Sigmoid colon (tissue), 7 donors: ENCODE measurements at regions of chr4 and their contacts with region 1.

Region 1: DNA sequence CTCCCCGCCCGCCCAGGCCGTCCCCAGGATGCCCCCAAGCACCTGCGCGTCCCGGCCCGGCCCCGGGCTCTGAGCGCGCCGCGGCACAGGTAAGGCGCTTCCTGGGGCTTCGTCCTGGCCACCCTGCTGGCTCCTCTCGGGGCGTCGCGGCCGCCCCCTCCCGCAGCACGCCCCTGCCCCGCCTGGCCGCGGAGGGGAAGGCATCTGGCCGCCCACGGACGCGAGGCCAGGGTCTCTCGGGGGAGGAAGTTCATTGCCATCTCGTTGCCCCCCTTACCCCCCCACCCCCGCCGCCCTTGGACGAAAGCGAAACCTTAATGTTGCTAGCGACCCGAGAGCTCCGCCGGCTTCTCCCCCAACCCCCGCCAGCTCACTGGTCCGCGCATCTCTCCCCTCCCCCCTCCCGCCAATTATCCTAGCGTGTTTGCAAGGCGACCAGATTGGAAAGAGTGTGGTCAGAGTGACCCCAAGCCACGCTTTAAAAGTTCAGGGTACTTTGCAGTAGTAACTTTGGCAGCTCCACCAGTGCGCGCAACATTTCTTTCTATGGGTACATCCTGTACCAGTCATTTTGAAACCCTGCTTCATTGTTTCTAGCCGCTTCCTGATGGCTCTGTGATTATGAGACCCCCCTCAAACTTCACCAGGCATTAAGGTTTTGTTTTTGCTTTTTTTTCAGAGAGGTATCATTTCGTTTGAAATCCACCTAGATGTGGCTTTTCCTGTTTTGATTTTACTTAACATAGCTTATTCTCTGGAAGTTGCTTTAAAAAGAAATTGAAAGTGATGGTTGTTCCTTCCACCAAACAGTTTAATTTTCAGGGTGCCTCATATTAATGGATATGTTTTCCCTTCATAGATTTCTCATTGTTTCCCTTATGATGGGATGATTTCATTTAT is 626 bp downstream of the TBC1D1 start:
- DNase-seq: peak; percentile 86
- H3K4me3 ChIP-seq: peak overlapping the region; percentile 75 to 97 (median 87)
- H3K27ac ChIP-seq: peak overlapping the region; percentile 88 to 98 (median 94)
- H3K4me1 ChIP-seq: peaks cover 0 to 66% (median 50%) of the 10 kb centered on the region in 4 donors
- H3K27me3 ChIP-seq: no peaks in the 10 kb centered on the region
- CTCF ChIP-seq: no peak
- EP300 ChIP-seq: peak in 3 of 4 donors; percentile 15 to 69 (median 35)
- POLR2A ChIP-seq: no peak

Region 2: GRCh38 chr4:37679301-37679700 is 212.2 kb before region 1 on chr4:
- intact Hi-C with region 1: no loop called
- DNase-seq: no peak
- H3K4me3 ChIP-seq: no peak overlapping the region
- H3K27ac ChIP-seq: no peak overlapping the region
- H3K4me1 ChIP-seq: peaks cover 0 to 44% (median 32%) of the 10 kb centered on the region in 4 donors
- H3K27me3 ChIP-seq: no peaks in the 10 kb centered on the region
- CTCF ChIP-seq: no peak
- EP300 ChIP-seq: no peak
- POLR2A ChIP-seq: no peak

Region 3: GRCh38 chr4:37802068-37802666 is 89.3 kb before region 1 on chr4:
- intact Hi-C with region 1: loop called (anchors 1 kb)
- DNase-seq: no peak
- H3K4me3 ChIP-seq: no peak overlapping the region
- H3K27ac ChIP-seq: no peak overlapping the region
- H3K4me1 ChIP-seq: peaks cover 0 to 18% (median 10%) of the 10 kb centered on the region in 4 donors
- H3K27me3 ChIP-seq: no peaks in the 10 kb centered on the region
- CTCF ChIP-seq: peak in 3 of 4 experiments; percentile 18 to 59 (median 38)
- EP300 ChIP-seq: no peak
- POLR2A ChIP-seq: no peak

Region 4: GRCh38 chr4:37873386-37873785 is 18.1 kb before region 1 on chr4:
- intact Hi-C with region 1: loop called (anchors 2 kb)
- DNase-seq: no peak
- H3K4me3 ChIP-seq: no peak overlapping the region
- H3K27ac ChIP-seq: peak overlapping the region; percentile 71 to 83 (median 80)
- H3K4me1 ChIP-seq: peaks cover 0 to 65% (median 57%) of the 10 kb centered on the region in 4 donors
- H3K27me3 ChIP-seq: no peaks in the 10 kb centered on the region
- CTCF ChIP-seq: no peak
- EP300 ChIP-seq: peak; percentile 91 to 98 (median 93)
- POLR2A ChIP-seq: no peak

Region 5: GRCh38 chr4:38023347-38024205 is 132.1 kb after region 1 on chr4:
- intact Hi-C with region 1: loop called (anchors 2 kb)
- DNase-seq: no peak
- H3K4me3 ChIP-seq: peak overlapping the region in 3 of 4 donors; percentile 15 to 30 (median 18)
- H3K27ac ChIP-seq: peak overlapping the region; percentile 73 to 88 (median 80)
- H3K4me1 ChIP-seq: peaks cover 0 to 71% (median 45%) of the 10 kb centered on the region in 4 donors
- H3K27me3 ChIP-seq: no peaks in the 10 kb centered on the region
- CTCF ChIP-seq: no peak
- EP300 ChIP-seq: peak; percentile 60 to 96 (median 82)
- POLR2A ChIP-seq: no peak

Region 6: GRCh38 chr4:38948551-38948950 is 1057.0 kb after region 1 on chr4:
- intact Hi-C with region 1: loop called (anchors 10 kb)
- DNase-seq: peak; percentile 94
- H3K4me3 ChIP-seq: no peak overlapping the region
- H3K27ac ChIP-seq: peak overlapping the region; percentile 80 to 89 (median 87)
- H3K4me1 ChIP-seq: peaks cover 0 to 79% (median 58%) of the 10 kb centered on the region in 4 donors
- H3K27me3 ChIP-seq: no peaks in the 10 kb centered on the region
- CTCF ChIP-seq: no peak
- EP300 ChIP-seq: peak; percentile 55 to 93 (median 88)
- POLR2A ChIP-seq: no peak